Aorta (tissue), 5 donors: ENCODE measurements at regions of chr1 and their contacts with region 1.

Region 1: GRCh38 chr1:184881941-184882913 is 92.1 kb downstream of the NIBAN1 start:
- DNase-seq: peak; percentile 78
- ATAC-seq: peak; percentile 88
- H3K4me3 ChIP-seq: no peak overlapping the region
- H3K27ac ChIP-seq: peak overlapping the region; percentile 97 to 99
- H3K4me1 ChIP-seq: peaks cover 6 to 9% of the 10 kb centered on the region in 2 donors
- H3K27me3 ChIP-seq: no peaks in the 10 kb centered on the region

Region 2: DNA sequence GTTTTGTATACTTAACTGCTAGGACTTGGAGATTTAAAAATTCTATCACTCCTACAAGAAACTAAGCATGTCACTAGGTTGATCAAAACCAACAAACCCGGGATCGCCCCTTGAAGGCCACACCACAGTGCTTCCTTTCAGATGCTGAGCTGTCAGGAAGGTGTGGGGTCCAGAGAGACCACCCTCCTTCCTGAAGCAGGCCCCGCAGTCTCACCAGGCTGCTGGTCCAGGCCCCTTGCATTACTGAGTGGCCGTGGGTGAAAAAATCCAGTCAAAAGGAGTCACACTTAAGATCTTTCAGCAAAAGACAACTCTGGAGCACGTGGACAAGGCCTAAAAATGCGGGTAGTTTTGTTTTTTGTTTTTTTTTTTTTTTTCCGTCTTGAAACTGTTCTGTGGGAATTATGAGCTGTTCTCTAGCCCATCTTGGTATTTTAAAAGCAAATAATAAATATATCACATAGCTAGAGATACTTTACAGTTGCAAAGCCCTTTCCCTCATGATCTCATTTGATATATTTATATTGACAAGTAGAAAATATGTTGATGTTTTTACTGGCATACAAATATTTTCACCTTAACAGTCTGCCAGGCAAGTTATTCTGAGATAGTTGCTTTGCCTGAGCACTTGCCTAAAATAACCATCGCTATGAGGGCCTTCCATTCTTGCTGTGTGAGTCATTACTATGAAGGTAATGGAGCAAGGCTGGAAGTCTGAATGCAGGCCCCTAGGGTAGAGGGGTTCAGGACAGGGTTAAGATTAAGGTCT is 54.4 kb before region 1 on chr1:
- intact Hi-C with region 1: loop called in 1 of 2 experiments (anchors 5 kb)
- DNase-seq: no peak
- ATAC-seq: peak; percentile 83
- H3K4me3 ChIP-seq: no peak overlapping the region
- H3K27ac ChIP-seq: peak overlapping the region; percentile 97 to 98
- H3K4me1 ChIP-seq: peaks cover 8 to 12% of the 10 kb centered on the region in 2 donors
- H3K27me3 ChIP-seq: no peaks in the 10 kb centered on the region

Region 3: DNA sequence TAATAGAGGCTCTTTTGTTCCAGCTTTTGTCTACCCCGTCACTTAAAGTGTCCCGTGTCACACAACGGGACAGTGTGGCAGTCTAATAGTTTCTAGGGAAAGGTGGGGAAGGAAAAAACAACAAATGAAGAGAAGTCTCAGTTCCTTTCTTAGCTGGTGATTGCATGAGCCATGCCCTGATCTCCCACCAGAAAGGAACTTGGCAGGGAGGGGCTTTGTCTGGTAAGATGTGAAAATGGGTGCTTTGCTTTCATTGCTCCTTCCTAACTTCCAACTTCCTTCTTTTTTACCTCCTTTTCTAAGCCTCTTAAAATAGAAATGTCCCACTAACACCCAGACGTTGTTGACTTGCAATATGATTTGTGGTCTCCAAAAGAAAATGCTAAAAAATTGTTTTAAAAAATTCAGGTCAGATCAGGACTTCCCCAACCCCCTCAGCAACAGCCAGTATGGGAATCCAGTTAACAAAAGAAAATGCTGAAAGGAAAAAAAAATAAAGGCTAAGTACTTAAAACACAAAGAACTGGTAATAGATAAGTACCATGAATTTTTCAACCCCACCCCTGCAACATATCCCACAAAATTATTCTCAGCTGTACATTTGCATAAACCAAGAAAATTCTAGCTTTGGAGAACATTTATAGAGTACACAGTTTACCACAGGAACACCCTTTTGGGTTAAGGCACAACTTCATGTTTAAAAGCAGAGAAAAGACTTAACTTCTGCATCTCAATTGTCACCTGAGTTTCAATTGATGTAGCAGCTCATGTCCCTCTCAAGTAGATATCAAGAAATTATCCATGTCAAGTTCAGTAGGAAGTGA is 14.1 kb before region 1 on chr1:
- intact Hi-C with region 1: loop called in 1 of 2 experiments (anchors 1 kb)
- DNase-seq: no peak
- ATAC-seq: no peak
- H3K4me3 ChIP-seq: no peak overlapping the region
- H3K27ac ChIP-seq: peak overlapping the region in 1 of 2 donors; percentile 76
- H3K4me1 ChIP-seq: peaks cover 7 to 13% of the 10 kb centered on the region in 2 donors
- H3K27me3 ChIP-seq: no peaks in the 10 kb centered on the region